ENCODE measurements at regions of chrX and their contacts with region 1.

Region 1: GRCh38 chrX:32408389-32408788 is 803.0 kb downstream of the DMD start:
- DNase-seq: no peak
- ATAC-seq: peak; percentile 52; the same call in 2 of the 3 replicates
- H3K4me3 ChIP-seq: no peak overlapping the region
- H3K27ac ChIP-seq: no peak overlapping the region
- H3K4me1 ChIP-seq: no peaks in the 10 kb centered on the region
- H3K27me3 ChIP-seq: no peaks in the 10 kb centered on the region
- CTCF ChIP-seq: peak; percentile 35 to 56 (median 43); a peak in 4 of 6 replicates
- EP300 ChIP-seq: no peak
- POLR2A ChIP-seq: no peak
- RAD21 ChIP-seq: peak; percentile 90

Region 2: DNA sequence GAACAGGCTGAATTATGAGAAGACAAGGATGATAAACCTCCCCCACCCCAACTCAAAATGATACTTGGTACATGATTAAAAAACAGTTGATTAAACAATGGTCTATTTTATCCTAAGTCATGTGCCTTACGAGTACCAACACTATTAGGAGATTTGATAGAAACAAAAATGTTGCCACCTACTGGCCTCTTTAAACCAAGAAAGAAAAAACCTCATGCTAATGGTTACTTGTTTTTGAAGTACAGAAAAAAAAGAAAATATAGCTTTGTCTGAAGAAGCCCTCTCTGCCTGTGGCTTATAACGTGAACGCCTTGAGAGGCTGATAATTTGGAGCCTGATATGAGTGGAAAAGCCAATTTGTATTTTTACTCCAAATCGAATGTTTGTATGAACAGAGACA is 264.8 kb after region 1 on chrX:
- CTCF ChIA-PET with region 1: interaction called, 3 read pairs
- POLR2A ChIA-PET with region 1: no interaction called
- RAD21 ChIA-PET with region 1: no interaction called
- SMC1A ChIA-PET with region 1: no interaction called
- in situ Hi-C with region 1: loop called (anchors 10 kb)
- intact Hi-C with region 1: loop called (anchors 1 kb)
- DNase-seq: no peak
- ATAC-seq: peak; percentile 52
- H3K4me3 ChIP-seq: no peak overlapping the region
- H3K27ac ChIP-seq: no peak overlapping the region
- H3K4me1 ChIP-seq: no peaks in the 10 kb centered on the region
- H3K27me3 ChIP-seq: no peaks in the 10 kb centered on the region
- CTCF ChIP-seq: peak in 2 of 3 experiments; percentile 15 to 28; a peak in 2 of 6 replicates
- EP300 ChIP-seq: no peak
- POLR2A ChIP-seq: no peak
- RAD21 ChIP-seq: peak; percentile 36; the same call in 1 of the 2 replicates

Region 3: DNA sequence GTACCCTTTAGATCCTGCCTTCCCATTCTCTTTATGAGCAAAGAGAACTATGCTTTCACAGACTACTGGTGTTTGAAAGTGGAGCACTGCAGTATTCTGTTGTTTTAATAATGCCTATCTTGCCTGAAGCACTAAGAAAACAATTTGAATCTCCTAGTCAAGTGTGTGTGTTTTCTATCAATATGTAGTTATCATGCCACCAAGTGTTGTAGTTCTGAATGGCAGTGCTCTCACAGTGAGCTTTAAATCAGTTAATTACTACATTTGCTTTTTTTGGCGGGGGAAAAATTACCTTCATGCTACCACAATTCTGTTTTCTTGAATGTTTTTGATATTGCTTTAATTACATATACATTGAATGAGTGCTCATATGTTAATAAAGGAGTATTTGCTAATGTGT is 1867.3 kb after region 1 on chrX:
- CTCF ChIA-PET with region 1: no interaction called
- POLR2A ChIA-PET with region 1: no interaction called
- RAD21 ChIA-PET with region 1: no interaction called
- SMC1A ChIA-PET with region 1: no interaction called
- in situ Hi-C with region 1: loop called (anchors 25 kb)
- intact Hi-C with region 1: no loop called
- DNase-seq: no peak
- ATAC-seq: no peak
- H3K4me3 ChIP-seq: no peak overlapping the region
- H3K27ac ChIP-seq: no peak overlapping the region
- H3K4me1 ChIP-seq: no peaks in the 10 kb centered on the region
- H3K27me3 ChIP-seq: no peaks in the 10 kb centered on the region
- CTCF ChIP-seq: no peak; a peak in 1 of 6 replicates
- EP300 ChIP-seq: no peak
- POLR2A ChIP-seq: no peak
- RAD21 ChIP-seq: no peak

Region 4: GRCh38 chrX:34300871-34301270 is 1892.5 kb after region 1 on chrX:
- CTCF ChIA-PET with region 1: no interaction called
- POLR2A ChIA-PET with region 1: no interaction called
- RAD21 ChIA-PET with region 1: no interaction called
- SMC1A ChIA-PET with region 1: no interaction called
- in situ Hi-C with region 1: loop called (anchors 25 kb)
- intact Hi-C with region 1: loop called (anchors 5 kb)
- DNase-seq: no peak
- ATAC-seq: peak; percentile 61; the same call in 2 of the 3 replicates
- H3K4me3 ChIP-seq: no peak overlapping the region
- H3K27ac ChIP-seq: no peak overlapping the region
- H3K4me1 ChIP-seq: no peaks in the 10 kb centered on the region
- H3K27me3 ChIP-seq: no peaks in the 10 kb centered on the region
- CTCF ChIP-seq: peak; percentile 49 to 75 (median 60); a peak in 5 of 6 replicates
- EP300 ChIP-seq: no peak
- POLR2A ChIP-seq: no peak
- RAD21 ChIP-seq: peak; percentile 78